ENCODE measurements at regions of chr2 and their contacts with region 1.

Region 1: GRCh38 chr2:238263204-238264071 is 23.6 kb upstream of the HES6 start:
- DNase-seq: peak; percentile 59
- H3K4me3 ChIP-seq: no peak overlapping the region
- CTCF ChIP-seq: peak; percentile 84

Region 2: DNA sequence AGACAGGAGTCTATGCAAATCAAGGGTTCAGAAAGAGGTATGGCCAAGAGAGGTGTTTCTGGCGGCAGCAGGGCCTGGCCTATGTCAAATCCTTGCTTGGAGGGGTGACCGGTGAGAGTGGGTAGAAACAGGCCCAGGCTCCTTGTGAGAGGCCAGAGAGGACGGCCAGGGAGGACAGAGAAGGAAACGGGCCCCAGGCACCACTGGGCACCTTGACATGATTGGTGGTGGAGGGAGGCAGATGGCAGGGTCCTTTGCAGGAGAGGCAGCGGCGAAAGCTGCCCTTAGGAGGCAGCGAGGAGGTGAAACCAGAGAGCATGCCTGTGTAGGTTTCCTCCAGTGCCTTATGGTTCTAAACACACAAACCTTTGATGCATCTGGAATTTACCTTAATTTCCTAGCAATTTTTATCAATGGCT is 397.8 kb before region 1 on chr2:
- CTCF ChIA-PET with region 1: interaction called, 20 read pairs
- POLR2A ChIA-PET with region 1: no interaction called
- DNase-seq: no peak
- H3K4me3 ChIP-seq: no peak overlapping the region
- CTCF ChIP-seq: peak; percentile 9

Region 3: GRCh38 chr2:238158527-238159070 is 104.8 kb before region 1 on chr2 and contains the start of gene ERFE:
- CTCF ChIA-PET with region 1: interaction called, 28 read pairs
- POLR2A ChIA-PET with region 1: no interaction called
- DNase-seq: no peak
- H3K4me3 ChIP-seq: peak within 1 kb of the TSS; percentile 43
- CTCF ChIP-seq: peak; percentile 72

Region 4: DNA sequence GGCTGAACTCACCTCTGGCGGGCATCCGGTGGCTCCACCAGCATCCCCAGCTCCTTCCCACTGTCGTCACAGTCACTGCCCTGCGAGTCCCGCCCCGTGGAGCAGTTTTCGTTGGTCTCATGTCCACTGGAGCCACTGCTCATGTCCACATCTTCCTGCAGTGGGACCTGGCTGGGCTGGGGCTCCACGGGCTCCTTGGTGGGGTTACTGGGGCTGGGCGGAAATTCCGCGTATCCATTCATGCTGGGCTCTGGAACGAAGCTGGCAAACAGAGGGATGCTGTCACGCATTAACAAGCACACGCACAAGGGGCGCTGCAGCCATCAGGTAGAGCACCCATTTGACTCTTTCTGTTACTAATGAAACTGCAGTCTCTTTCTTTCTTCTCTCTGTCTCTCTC is 14.3 kb after region 1 on chr2:
- CTCF ChIA-PET with region 1: interaction called, 148 read pairs
- POLR2A ChIA-PET with region 1: no interaction called
- DNase-seq: no peak
- H3K4me3 ChIP-seq: no peak overlapping the region
- CTCF ChIP-seq: no peak

Region 5: DNA sequence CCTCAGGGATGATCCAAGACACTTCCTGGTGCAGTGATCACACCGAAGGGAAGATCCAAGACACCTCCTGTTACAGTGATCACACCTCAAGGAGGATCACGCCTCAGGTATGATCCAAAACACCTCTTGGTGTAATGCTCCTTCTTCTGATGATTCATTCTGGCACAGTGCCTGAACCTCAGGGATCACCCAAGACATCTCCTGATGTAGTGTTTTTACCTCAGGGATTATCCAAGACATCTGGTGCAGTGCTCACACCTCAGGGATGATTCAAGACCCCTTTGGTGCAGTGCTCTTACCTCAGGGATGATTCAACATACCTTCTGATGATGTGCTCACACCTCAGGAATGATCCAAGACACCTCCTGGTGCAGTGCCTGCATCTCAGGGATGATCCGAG is 287.7 kb after region 1 on chr2:
- CTCF ChIA-PET with region 1: no interaction called
- POLR2A ChIA-PET with region 1: no interaction called
- DNase-seq: no peak
- H3K4me3 ChIP-seq: no peak overlapping the region
- CTCF ChIP-seq: no peak